Naive thymus-derived CD8-positive, alpha-beta T cell (primary cell): ENCODE measurements at regions of chr10 and their contacts with region 1.

Region 1: DNA sequence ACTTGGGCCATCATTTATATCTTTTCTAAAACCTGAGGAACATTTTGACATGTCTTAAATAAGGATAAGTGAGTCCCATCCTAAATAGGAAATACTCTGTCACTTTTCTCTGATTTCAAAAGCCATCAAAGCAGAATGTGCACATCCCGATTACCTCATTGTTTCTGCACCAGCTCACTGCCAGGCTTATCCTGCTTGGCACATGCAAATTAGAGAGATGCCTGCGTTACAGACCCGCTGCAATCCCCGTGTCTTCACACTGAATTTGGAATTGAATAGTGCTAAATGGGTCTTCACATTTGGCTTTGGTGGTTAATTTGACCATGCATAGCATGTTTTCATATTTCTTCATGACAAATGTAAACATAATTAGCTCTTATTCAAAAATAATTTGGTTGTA is 279.5 kb downstream of the WDR37 start:
- DNase-seq: no peak
- ATAC-seq: no peak
- H3K4me3 Mint-ChIP-seq: no peak overlapping the region
- H3K27ac Mint-ChIP-seq: no peak overlapping the region
- H3K4me1 Mint-ChIP-seq: no peaks in the 10 kb centered on the region
- H3K27me3 Mint-ChIP-seq: peaks cover 1 to 38% (median 11%) of the 10 kb centered on the region in 5 donors

Region 2: DNA sequence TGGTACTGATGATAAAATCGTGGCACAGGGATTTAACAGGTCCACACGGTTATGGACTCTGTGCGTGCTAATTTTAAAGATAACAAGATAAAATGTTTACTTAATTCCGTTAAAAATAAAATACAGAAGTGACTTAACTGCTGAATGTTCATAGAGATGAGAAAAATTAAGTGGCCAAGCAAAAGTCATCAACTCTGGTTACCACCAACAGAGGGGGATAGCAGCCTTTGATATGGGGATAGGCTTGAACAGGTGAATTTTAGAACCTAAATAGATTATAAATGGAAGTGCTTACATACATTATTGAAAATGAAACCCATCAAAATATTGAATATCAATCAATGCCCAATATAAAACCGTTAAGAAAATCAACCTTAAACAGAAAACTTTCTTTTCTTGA is 34.5 kb before region 1 on chr10:
- POLR2A ChIA-PET with region 1: no interaction called
- DNase-seq: no peak
- ATAC-seq: no peak
- H3K4me3 Mint-ChIP-seq: no peak overlapping the region
- H3K27ac Mint-ChIP-seq: no peak overlapping the region
- H3K4me1 Mint-ChIP-seq: peaks cover 0 to 6% (median under 1%) of the 10 kb centered on the region in 4 donors
- H3K27me3 Mint-ChIP-seq: peaks cover 10 to 34% (median 22%) of the 10 kb centered on the region in 5 donors

Region 3: DNA sequence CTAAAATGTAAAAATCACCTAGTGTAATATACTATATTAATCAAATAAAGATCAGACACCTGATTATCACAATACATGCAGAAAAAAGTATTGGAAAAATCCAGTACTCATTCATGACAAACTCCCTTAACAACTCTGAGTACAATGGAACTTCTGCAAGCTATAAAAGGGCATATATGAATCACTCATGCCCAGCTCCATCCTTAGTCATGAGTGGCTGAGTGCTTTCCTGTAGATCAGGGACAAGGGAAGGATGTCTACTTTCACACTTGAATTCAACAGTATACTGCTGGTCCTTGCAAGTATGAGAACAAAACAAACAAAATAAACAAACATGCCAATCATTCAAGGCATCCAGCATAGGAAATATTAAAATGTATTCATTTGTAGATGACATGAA is 285.2 kb after region 1 on chr10:
- POLR2A ChIA-PET with region 1: interaction called, 10 read pairs
- DNase-seq: no peak
- ATAC-seq: no peak
- H3K4me3 Mint-ChIP-seq: no peak overlapping the region
- H3K27ac Mint-ChIP-seq: no peak overlapping the region
- H3K4me1 Mint-ChIP-seq: no peaks in the 10 kb centered on the region
- H3K27me3 Mint-ChIP-seq: peaks cover 2 to 22% (median 12%) of the 10 kb centered on the region in 5 donors